Psoas muscle (tissue), 8 donors: ENCODE measurements at regions of chr9 and their contacts with region 1.

Region 1: DNA sequence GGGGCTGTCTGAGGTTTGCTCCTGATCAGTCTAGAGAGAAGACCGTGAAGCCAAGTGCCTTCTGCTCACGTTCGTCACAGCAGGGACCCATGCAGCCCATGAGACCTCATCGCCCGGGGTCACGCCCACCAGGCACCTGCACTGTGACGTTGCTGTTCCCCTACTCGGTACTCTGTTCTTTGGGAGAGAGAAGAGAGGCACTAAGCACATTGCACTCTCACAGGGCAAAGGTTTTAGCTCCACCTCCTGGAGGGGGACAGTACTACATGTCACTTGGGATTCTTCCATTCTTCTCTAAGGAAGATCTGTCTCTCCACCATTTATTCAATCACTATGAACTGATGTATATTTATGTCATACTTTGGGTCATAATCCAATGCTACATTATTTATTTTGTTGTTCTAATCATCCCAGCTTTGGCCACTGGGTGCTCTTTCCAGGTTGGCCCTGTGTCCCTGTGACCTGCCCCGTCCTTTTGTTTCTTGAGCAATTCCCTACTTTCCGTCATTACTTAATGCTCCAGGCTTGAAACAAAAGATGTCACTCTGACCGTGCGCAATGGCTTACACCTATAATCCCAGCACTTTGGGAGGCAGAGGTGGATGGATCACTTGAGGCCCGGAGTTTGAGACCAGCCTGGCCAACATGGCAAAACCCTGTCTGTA is 31.4 kb upstream of the BRD3 start:
- DNase-seq: no peak
- ATAC-seq: peak; percentile 86 to 90 (median 88)
- H3K4me3 ChIP-seq: no peak overlapping the region
- H3K27ac ChIP-seq: no peak overlapping the region
- H3K4me1 ChIP-seq: no peaks in the 10 kb centered on the region
- H3K27me3 ChIP-seq: peaks cover 0 to 8% (median 2%) of the 10 kb centered on the region in 3 donors
- CTCF ChIP-seq: peak; percentile 90

Region 2: DNA sequence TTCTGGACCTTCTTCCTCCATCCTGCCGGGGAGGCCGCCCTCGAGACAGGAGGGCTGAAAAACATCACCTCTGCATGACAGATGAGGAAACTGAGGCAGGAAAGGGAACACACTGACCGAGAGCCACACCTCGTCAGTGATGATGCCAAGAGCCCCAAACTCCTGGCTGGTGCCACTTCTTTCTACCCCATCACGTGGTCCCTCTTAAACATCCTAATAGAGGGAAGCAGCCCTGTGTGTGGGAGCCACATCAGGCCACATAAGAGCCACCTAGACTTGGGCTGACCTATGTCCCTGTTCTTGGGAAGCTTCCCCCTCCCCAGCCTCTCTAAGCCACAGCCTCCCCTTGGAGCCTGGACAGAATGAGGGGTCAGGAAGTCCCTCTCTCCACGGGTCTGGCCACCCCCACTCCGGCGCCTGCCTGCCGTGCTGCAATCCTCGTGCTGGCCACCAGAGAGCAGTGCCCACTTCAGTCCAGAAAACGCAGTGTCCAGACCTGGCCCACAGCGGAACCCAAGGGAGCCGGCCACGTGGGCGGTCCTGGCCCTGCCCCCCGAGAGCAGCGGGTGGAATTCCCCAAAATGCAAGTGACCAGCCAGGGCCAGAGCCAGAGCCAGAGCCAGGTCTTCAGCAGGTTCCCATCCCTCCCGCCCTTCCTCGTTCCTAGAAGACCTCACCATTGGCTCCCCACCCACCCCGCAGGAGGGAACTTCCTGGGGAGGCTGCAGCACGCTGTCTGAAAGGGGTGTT is 306.4 kb before region 1 on chr9:
- intact Hi-C with region 1: loop called (anchors 1 to 2 kb)
- DNase-seq: peak; percentile 79 to 84
- ATAC-seq: peak; percentile 84 to 92 (median 86)
- H3K4me3 ChIP-seq: no peak overlapping the region
- H3K27ac ChIP-seq: no peak overlapping the region
- H3K4me1 ChIP-seq: no peaks in the 10 kb centered on the region
- H3K27me3 ChIP-seq: no peaks in the 10 kb centered on the region
- CTCF ChIP-seq: peak; percentile 93